OCI-LY7 (cell line): ENCODE measurements at regions of chr15 and their contacts with region 1.

Region 1: GRCh38 chr15:80058851-80059785 is at the start of gene ZFAND6:
- DNase-seq: peak; percentile 96
- H3K4me3 ChIP-seq: peak within 1 kb of the TSS; percentile 94
- H3K27ac ChIP-seq: peak within 1 kb of the TSS; percentile 81
- H3K4me1 ChIP-seq: peaks cover 40% of the 10 kb centered on the region
- CTCF ChIP-seq: 0 out of 2 replicates have a peak, but pooled peaks have one; percentile 29
- total RNA-seq, gene ZFAND6: 111 and 122 TPM in 2 replicates

Region 2: GRCh38 chr15:79896637-79897379 is 162.3 kb before region 1 on chr15 and contains the start of gene MTHFS:
- CTCF ChIA-PET with region 1: no interaction called
- POLR2A ChIA-PET with region 1: interaction called, 3 read pairs
- intact Hi-C with region 1: loop called (anchors 2 kb)
- DNase-seq: peak; percentile 85
- H3K4me3 ChIP-seq: peak within 1 kb of the TSS; percentile 80
- H3K27ac ChIP-seq: peak within 1 kb of the TSS; percentile 62
- H3K4me1 ChIP-seq: peaks cover 19% of the 10 kb centered on the region
- CTCF ChIP-seq: peak; percentile 69
- total RNA-seq, gene MTHFS: 12.4 and 16.4 TPM in 2 replicates

Region 3: GRCh38 chr15:80010131-80010673 is 48.9 kb before region 1 on chr15:
- CTCF ChIA-PET with region 1: no interaction called
- POLR2A ChIA-PET with region 1: interaction called, 4 read pairs
- intact Hi-C with region 1: loop called (anchors 2 kb)
- DNase-seq: no peak
- H3K4me3 ChIP-seq: no peak overlapping the region
- H3K27ac ChIP-seq: peak overlapping the region; percentile 25
- H3K4me1 ChIP-seq: peaks cover 51% of the 10 kb centered on the region
- CTCF ChIP-seq: no peak

Region 4: DNA sequence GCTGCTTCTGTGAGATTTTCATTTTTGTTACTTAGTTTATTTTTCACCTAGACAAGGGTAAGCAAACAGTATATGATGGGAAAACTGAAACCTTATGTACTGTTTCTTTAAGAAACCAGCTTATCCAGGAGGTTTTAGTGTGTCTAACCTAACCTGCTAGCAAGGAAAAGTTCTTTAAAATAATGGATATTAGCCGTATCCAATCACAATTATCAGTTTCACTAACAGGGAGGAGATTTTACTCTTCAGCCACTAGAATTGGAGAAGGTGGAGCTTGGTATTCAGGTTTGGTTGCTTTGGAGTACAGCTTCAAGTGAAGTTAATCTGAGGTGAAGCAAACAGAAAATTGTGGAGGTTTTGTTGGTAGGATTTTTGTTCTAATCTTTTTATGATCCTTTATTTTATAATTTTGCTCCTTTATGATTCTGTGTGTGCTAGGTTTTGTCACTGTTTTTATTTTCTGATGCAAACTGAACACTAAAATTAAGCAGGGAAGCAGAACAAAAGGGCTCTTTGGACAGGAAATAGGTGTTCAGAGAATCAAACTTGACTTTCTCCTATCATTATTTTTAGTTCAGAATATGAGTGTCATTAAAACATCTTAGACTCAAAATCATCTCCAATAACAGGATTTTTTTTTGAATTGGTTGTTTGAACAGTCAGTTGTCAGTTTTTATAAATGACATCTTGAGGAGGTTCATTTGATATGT is 13.3 kb after region 1 on chr15:
- CTCF ChIA-PET with region 1: interaction called, 3 read pairs
- POLR2A ChIA-PET with region 1: interaction called, 30 read pairs
- intact Hi-C with region 1: no loop called
- DNase-seq: peak; percentile 85
- H3K4me3 ChIP-seq: peak overlapping the region; percentile 71
- H3K27ac ChIP-seq: peak overlapping the region; percentile 60
- H3K4me1 ChIP-seq: peaks cover 54% of the 10 kb centered on the region
- CTCF ChIP-seq: no peak

Region 5: GRCh38 chr15:80152180-80152845 is 93.2 kb after region 1 on chr15:
- CTCF ChIA-PET with region 1: no interaction called
- POLR2A ChIA-PET with region 1: interaction called, 3 read pairs
- intact Hi-C with region 1: loop called (anchors 2 kb)
- DNase-seq: peak; percentile 91
- H3K4me3 ChIP-seq: peak overlapping the region; percentile 73
- H3K27ac ChIP-seq: no peak overlapping the region
- H3K4me1 ChIP-seq: peaks cover 14% of the 10 kb centered on the region
- CTCF ChIP-seq: no peak

Region 6: DNA sequence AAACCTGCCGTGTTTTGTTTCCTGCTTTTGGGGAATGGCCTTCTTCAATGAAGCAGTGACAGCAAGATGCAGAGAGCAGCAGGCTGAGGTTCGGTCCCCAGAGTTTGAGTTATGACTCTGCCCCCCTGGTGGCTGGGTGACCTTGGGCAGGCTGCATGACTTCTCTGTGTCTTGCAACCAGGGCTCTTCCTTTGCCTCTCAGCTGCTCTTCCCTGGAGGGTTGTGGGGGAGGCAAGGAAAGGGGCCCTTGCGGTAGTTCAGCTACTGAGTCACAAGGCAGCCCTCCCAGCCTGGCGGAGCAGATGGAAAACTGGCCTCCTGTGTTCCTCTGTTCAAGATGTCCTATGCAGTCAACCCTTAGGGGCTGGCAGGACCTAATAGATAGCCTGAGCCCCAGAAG is 175.8 kb after region 1 on chr15:
- CTCF ChIA-PET with region 1: no interaction called
- POLR2A ChIA-PET with region 1: no interaction called
- intact Hi-C with region 1: loop called (anchors 5 kb)
- DNase-seq: peak; percentile 42
- H3K4me3 ChIP-seq: no peak overlapping the region
- H3K27ac ChIP-seq: no peak overlapping the region
- H3K4me1 ChIP-seq: no peaks in the 10 kb centered on the region
- CTCF ChIP-seq: peak; percentile 76

Region 7: DNA sequence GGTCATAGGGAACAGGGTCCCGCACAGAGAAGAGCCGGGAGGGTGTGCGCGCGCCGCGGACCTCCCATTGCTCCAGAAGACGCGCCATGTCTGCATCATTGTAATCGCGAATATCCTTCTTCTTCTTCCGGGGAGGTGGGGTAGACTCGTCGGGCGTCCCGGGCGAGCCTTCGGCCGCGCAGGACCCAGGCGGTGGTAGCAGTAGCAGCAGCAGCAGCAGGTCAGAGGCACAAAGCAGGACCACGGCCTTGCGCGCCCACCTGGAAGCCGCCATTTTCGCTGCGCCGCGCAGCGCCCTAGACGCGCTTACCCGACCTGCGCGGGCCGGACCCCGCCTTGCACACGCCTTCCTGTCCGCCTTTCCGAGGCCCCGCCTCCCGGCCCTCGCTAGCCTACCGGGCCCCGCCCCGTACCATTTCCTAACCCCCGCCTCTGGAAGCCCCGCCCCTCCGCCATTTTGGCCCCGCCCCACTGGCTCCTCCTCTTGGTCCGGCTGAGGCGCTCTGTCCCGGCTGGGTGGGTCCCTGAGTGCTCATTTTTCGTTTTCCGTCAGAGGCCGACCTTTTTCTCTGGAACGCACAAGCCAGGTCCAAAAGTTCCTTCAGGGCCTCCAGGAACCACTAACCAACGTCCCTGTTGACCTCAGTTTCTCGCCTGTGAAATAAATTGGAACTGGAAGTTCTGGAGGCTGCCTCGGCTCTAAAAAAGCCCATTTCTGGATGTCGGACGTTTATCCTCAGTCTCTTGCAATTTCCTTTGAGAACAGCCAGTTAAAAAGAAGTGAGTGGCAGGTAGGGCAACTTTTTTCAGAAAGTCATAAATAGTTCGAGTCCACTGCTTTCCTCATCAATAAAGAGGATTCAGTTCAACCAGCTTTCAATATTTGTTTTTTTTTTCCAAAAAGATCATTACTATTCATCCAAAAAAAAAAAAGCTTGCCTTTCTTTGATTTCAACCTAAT is 930.7 kb after region 1 on chr15 and contains the start of gene MESD:
- CTCF ChIA-PET with region 1: no interaction called
- POLR2A ChIA-PET with region 1: no interaction called
- intact Hi-C with region 1: no loop called
- DNase-seq: peak; percentile 97
- H3K4me3 ChIP-seq: peak within 1 kb of the TSS; percentile 86
- H3K27ac ChIP-seq: peak within 1 kb of the TSS; percentile 47
- H3K4me1 ChIP-seq: peaks cover 38% of the 10 kb centered on the region
- CTCF ChIP-seq: no peak
- total RNA-seq, gene MESD: 14.9 and 17.3 TPM in 2 replicates